Ascending aorta (tissue), 2 donors: ENCODE measurements at regions of chr3 and their contacts with region 1.

Region 1: GRCh38 chr3:62098646-62099365 is 274.5 kb downstream of the FEZF2 start:
- DNase-seq: no peak
- H3K4me3 ChIP-seq: no peak overlapping the region
- H3K27ac ChIP-seq: peak overlapping the region; percentile 52 to 63
- H3K4me1 ChIP-seq: peaks cover 4 to 40% of the 10 kb centered on the region in 2 donors
- H3K27me3 ChIP-seq: no peaks in the 10 kb centered on the region
- CTCF ChIP-seq: no peak

Region 2: GRCh38 chr3:62051507-62051906 is 47.3 kb before region 1 on chr3:
- intact Hi-C with region 1: no loop called
- DNase-seq: no peak
- H3K4me3 ChIP-seq: no peak overlapping the region
- H3K27ac ChIP-seq: no peak overlapping the region
- H3K4me1 ChIP-seq: no peaks in the 10 kb centered on the region
- H3K27me3 ChIP-seq: no peaks in the 10 kb centered on the region
- CTCF ChIP-seq: no peak

Region 3: DNA sequence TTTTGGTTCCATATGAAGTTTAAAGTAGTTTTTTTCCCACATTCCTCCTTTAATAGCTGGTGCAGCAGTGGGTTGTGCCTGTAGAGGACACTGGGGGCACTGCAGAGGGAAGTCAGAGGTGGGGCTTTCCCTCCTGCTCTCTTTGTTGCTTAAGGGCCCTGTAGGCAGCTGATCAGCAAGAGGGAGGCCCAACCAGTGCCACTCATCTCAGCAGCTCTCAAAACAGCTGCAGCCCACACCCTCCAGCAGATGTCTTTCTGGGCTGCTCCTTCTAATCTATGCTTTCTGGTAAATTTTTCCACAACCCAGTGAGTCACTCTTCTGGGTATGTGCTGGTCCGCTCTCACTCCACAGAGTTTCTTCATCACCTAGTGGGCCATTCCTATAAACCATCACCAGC is 10.7 kb after region 1 on chr3:
- intact Hi-C with region 1: loop called (anchors 1 kb)
- DNase-seq: peak; percentile 22 to 79
- H3K4me3 ChIP-seq: no peak overlapping the region
- H3K27ac ChIP-seq: no peak overlapping the region
- H3K4me1 ChIP-seq: no peaks in the 10 kb centered on the region
- H3K27me3 ChIP-seq: no peaks in the 10 kb centered on the region
- CTCF ChIP-seq: no peak

Region 4: GRCh38 chr3:62632510-62633214 is 533.9 kb after region 1 on chr3:
- intact Hi-C with region 1: no loop called
- DNase-seq: no peak
- H3K4me3 ChIP-seq: no peak overlapping the region
- H3K27ac ChIP-seq: no peak overlapping the region
- H3K4me1 ChIP-seq: no peaks in the 10 kb centered on the region
- H3K27me3 ChIP-seq: no peaks in the 10 kb centered on the region
- CTCF ChIP-seq: no peak